Naive thymus-derived CD4-positive, alpha-beta T cell (primary cell): ENCODE measurements at regions of chr1 and their contacts with region 1.

Region 1: GRCh38 chr1:151008190-151008860 is at the start of gene PRUNE1:
- DNase-seq: peak; percentile 87 to 98 (median 92)
- ATAC-seq: peak; percentile 96
- H3K4me3 ChIP-seq: peak within 1 kb of the TSS; percentile 88
- H3K4me3 Mint-ChIP-seq: peak within 1 kb of the TSS; percentile 91 to 100 (median 97)
- H3K27ac ChIP-seq: peak within 1 kb of the TSS; percentile 96
- H3K27ac Mint-ChIP-seq: peak within 1 kb of the TSS; percentile 92 to 99 (median 97)
- H3K4me1 ChIP-seq: peaks cover 32 to 45% of the 10 kb centered on the region in 2 donors
- H3K4me1 Mint-ChIP-seq: peaks cover 46 to 84% (median 70%) of the 10 kb centered on the region in 7 donors
- H3K27me3 ChIP-seq: no peaks in the 10 kb centered on the region
- H3K27me3 Mint-ChIP-seq: no peaks in the 10 kb centered on the region
- total RNA-seq, gene PRUNE1: 13.3 to 41.8 (median 17.2) TPM

Region 2: GRCh38 chr1:149997585-149998262 is 1010.6 kb before region 1 on chr1:
- CTCF ChIA-PET with region 1: no interaction called
- POLR2A ChIA-PET with region 1: no interaction called
- intact Hi-C with region 1: no loop called
- DNase-seq: no peak
- ATAC-seq: peak; percentile 81
- H3K4me3 ChIP-seq: no peak overlapping the region
- H3K4me3 Mint-ChIP-seq: peak overlapping the region in 1 of 10 donors; percentile 26
- H3K27ac ChIP-seq: no peak overlapping the region
- H3K27ac Mint-ChIP-seq: no peak overlapping the region
- H3K4me1 ChIP-seq: peaks cover 0 to 4% of the 10 kb centered on the region in 2 donors
- H3K4me1 Mint-ChIP-seq: peaks cover 12 to 33% (median 18%) of the 10 kb centered on the region in 7 donors
- H3K27me3 ChIP-seq: no peaks in the 10 kb centered on the region
- H3K27me3 Mint-ChIP-seq: no peaks in the 10 kb centered on the region

Region 3: DNA sequence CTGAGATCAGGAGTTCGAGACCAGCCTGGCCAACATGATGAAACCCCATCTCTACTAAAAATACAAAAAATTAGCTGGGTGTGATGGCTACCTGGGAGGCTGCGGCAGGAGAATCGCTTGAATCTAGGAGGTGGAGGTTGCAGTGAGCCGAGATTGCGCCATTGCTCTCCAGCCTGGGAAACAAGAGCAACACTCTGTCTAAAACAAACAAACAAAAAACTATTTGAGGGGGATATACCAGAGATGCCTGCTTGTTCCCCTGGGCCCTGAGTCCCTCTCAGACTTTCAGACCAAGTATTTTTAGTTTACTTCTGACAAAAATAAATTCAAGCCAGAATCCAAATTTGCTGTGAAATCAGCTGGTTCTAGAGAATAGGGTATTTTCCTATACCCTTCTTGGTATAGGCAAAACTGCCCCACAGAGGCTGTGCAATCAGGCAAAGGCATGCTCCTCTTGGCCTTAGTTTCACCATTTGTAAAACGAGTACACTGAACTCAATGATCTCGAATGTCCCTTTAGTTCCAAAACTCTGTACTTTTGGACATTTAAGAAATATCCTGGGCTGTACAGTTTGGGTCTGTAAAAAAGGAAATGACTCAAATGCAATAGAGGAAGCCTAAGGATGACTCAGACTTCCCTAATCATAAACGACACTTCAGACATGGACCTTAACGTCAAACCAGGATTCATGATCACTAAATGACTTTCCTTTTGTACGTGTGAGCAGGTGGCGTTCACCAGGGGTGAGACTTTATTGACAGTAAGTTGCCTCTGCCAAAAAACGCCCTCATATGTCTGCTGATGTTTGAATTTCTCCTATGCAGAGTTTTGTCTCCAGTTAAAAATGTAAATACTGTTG is 395.0 kb before region 1 on chr1:
- CTCF ChIA-PET with region 1: no interaction called
- POLR2A ChIA-PET with region 1: no interaction called
- intact Hi-C with region 1: loop called in 1 of 2 experiments (anchors 10 kb)
- DNase-seq: peak in 2 of 9 donors; percentile 47 to 55
- ATAC-seq: peak; percentile 48
- H3K4me3 ChIP-seq: no peak overlapping the region
- H3K4me3 Mint-ChIP-seq: peak overlapping the region in 4 of 10 donors; percentile 21 to 80 (median 54)
- H3K27ac ChIP-seq: no peak overlapping the region
- H3K27ac Mint-ChIP-seq: peak overlapping the region; percentile 29 to 95 (median 88)
- H3K4me1 ChIP-seq: peaks cover 30 to 52% of the 10 kb centered on the region in 2 donors
- H3K4me1 Mint-ChIP-seq: peaks cover 27 to 59% (median 51%) of the 10 kb centered on the region in 7 donors
- H3K27me3 ChIP-seq: no peaks in the 10 kb centered on the region
- H3K27me3 Mint-ChIP-seq: no peaks in the 10 kb centered on the region

Region 4: GRCh38 chr1:150925816-150926741 is 82.2 kb before region 1 on chr1 and contains the start of gene SETDB1:
- CTCF ChIA-PET with region 1: no interaction called
- POLR2A ChIA-PET with region 1: no interaction called
- intact Hi-C with region 1: loop called (anchors 1 kb)
- DNase-seq: peak; percentile 69 to 93 (median 90)
- ATAC-seq: peak; percentile 98
- H3K4me3 ChIP-seq: peak within 1 kb of the TSS; percentile 92
- H3K4me3 Mint-ChIP-seq: peak within 1 kb of the TSS; percentile 92 to 97 (median 94)
- H3K27ac ChIP-seq: peak within 1 kb of the TSS; percentile 91
- H3K27ac Mint-ChIP-seq: peak within 1 kb of the TSS; percentile 92 to 99 (median 95)
- H3K4me1 ChIP-seq: peaks cover 0 to 7% of the 10 kb centered on the region in 2 donors
- H3K4me1 Mint-ChIP-seq: peaks cover 15 to 35% (median 27%) of the 10 kb centered on the region in 7 donors
- H3K27me3 ChIP-seq: no peaks in the 10 kb centered on the region
- H3K27me3 Mint-ChIP-seq: no peaks in the 10 kb centered on the region
- total RNA-seq, gene SETDB1: 57.3 to 94.9 (median 61.7) TPM

Region 5: DNA sequence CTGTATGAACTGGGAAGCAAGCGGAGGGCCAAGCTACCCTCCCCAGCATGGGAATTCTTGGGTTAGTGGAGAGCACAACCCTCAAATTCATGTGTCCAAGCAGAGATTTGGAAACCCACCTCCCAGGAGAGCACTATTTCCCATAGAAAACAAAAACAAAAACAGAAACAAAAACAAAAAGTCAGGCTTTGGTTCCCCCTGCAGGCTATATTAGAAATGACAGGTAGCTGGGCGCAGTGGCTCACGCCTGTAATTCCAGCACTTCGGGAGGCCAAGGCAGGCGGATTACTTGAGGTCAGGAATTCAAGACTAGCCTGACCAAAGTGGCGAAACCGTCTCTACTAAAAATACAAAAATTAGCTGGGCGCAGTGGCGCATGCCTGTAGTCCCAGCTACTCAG is 12.4 kb before region 1 on chr1:
- CTCF ChIA-PET with region 1: interaction called, 29 read pairs
- POLR2A ChIA-PET with region 1: interaction called, 20 read pairs
- intact Hi-C with region 1: loop called in 1 of 2 experiments (anchors 1 kb)
- DNase-seq: peak in 2 of 9 donors; percentile 22 to 41
- ATAC-seq: peak; percentile 75
- H3K4me3 ChIP-seq: no peak overlapping the region
- H3K4me3 Mint-ChIP-seq: no peak overlapping the region
- H3K27ac ChIP-seq: peak overlapping the region; percentile 41
- H3K27ac Mint-ChIP-seq: peak overlapping the region; percentile 19 to 91 (median 69)
- H3K4me1 ChIP-seq: peaks cover 3 to 21% of the 10 kb centered on the region in 2 donors
- H3K4me1 Mint-ChIP-seq: peaks cover 5 to 25% (median 21%) of the 10 kb centered on the region in 7 donors
- H3K27me3 ChIP-seq: no peaks in the 10 kb centered on the region
- H3K27me3 Mint-ChIP-seq: no peaks in the 10 kb centered on the region

Region 6: DNA sequence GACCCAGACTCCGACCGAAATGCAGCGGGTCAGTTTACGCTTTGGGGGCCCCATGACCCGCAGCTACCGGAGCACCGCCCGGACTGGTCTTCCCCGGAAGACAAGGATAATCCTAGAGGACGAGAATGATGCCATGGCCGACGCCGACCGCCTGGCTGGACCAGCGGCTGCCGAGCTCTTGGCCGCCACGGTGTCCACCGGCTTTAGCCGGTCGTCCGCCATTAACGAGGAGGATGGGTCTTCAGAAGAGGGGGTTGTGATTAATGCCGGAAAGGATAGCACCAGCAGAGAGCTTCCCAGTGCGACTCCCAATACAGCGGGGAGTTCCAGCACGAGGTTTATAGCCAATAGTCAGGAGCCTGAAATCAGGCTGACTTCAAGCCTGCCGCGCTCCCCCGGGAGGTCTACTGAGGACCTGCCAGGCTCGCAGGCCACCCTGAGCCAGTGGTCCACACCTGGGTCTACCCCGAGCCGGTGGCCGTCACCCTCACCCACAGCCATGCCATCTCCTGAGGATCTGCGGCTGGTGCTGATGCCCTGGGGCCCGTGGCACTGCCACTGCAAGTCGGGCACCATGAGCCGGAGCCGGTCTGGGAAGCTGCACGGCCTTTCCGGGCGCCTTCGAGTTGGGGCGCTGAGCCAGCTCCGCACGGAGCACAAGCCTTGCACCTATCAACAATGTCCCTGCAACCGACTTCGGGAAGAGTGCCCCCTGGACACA is 39.8 kb after region 1 on chr1:
- CTCF ChIA-PET with region 1: interaction called, 3 read pairs
- POLR2A ChIA-PET with region 1: interaction called, 9 read pairs
- intact Hi-C with region 1: loop called in 1 of 2 experiments (anchors 1 kb)
- DNase-seq: peak; percentile 43 to 64 (median 55)
- ATAC-seq: peak; percentile 86
- H3K4me3 ChIP-seq: peak overlapping the region; percentile 73
- H3K4me3 Mint-ChIP-seq: peak overlapping the region; percentile 85 to 91 (median 90)
- H3K27ac ChIP-seq: peak overlapping the region; percentile 81
- H3K27ac Mint-ChIP-seq: peak overlapping the region; percentile 66 to 96 (median 93)
- H3K4me1 ChIP-seq: peaks cover 15 to 37% of the 10 kb centered on the region in 2 donors
- H3K4me1 Mint-ChIP-seq: peaks cover 37 to 89% (median 71%) of the 10 kb centered on the region in 7 donors
- H3K27me3 ChIP-seq: no peaks in the 10 kb centered on the region
- H3K27me3 Mint-ChIP-seq: no peaks in the 10 kb centered on the region

Region 7: DNA sequence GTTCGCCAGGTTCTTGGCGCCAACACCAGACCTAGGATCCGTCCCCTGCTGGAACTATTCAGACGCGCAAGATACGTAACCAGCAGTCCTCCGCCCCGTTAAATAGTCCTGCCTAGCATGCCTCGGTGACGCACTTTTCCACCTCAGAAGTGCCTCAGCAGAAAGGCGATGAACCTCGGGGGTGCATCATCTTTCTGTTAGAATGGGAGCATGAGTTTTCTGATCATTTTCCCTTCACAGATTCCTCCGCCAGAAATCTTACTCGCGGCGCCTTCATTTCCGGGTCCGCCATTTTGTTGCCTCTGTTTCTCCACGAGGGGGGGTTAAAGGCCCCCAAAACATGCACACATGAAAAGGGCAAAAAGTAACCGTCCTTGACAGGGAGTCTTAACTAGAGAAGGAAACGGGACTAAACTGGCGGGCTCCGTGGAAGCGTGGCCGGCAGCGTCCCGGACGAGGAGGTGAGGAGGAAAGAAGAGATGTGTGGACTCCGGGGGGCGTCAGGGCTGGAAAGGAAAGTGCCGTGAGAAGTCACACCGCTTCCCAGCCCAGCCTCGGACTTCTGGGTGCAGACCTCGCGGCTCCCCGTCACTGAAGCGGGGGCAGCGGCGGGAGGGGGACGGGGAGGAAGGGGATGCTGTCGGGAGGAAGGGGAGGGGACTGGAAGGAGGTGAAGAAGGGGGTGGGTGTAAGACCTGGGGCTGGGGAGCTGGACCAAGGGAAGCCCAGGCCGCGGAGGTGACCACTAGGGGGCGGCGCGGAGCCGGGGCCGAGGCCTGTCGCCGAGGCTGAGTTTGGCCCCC is 62.4 kb after region 1 on chr1 and contains the start of gene GABPB2:
- CTCF ChIA-PET with region 1: no interaction called
- POLR2A ChIA-PET with region 1: interaction called, 4 read pairs
- intact Hi-C with region 1: loop called in 1 of 2 experiments (anchors 1 kb)
- DNase-seq: peak; percentile 78 to 94 (median 89)
- ATAC-seq: peak; percentile 91
- H3K4me3 ChIP-seq: peak within 1 kb of the TSS; percentile 99
- H3K4me3 Mint-ChIP-seq: peak within 1 kb of the TSS; percentile 94 to 100 (median 99)
- H3K27ac ChIP-seq: peak within 1 kb of the TSS; percentile 94
- H3K27ac Mint-ChIP-seq: peak within 1 kb of the TSS; percentile 97 to 100 (median 100)
- H3K4me1 ChIP-seq: peaks cover 8 to 9% of the 10 kb centered on the region in 2 donors
- H3K4me1 Mint-ChIP-seq: peaks cover 5 to 37% (median 29%) of the 10 kb centered on the region in 7 donors
- H3K27me3 ChIP-seq: no peaks in the 10 kb centered on the region
- H3K27me3 Mint-ChIP-seq: peaks cover 0 to 2% (median 0%) of the 10 kb centered on the region in 5 donors
- total RNA-seq, gene GABPB2: 13.7 to 42.2 (median 32.2) TPM